Adrenal gland (tissue), 19 donors: ENCODE measurements at regions of chr21 and their contacts with region 1.

Region 1: GRCh38 chr21:31580866-31581276 is 78.6 kb upstream of the SOD1 start:
- DNase-seq: peak; percentile 53 to 89 (median 72)
- H3K4me3 ChIP-seq: no peak overlapping the region
- H3K27ac ChIP-seq: no peak overlapping the region
- H3K4me1 ChIP-seq: no peaks in the 10 kb centered on the region
- H3K27me3 ChIP-seq: no peaks in the 10 kb centered on the region
- CTCF ChIP-seq: peak; percentile 49 to 84 (median 80)
- POLR2A ChIP-seq: no peak

Region 2: DNA sequence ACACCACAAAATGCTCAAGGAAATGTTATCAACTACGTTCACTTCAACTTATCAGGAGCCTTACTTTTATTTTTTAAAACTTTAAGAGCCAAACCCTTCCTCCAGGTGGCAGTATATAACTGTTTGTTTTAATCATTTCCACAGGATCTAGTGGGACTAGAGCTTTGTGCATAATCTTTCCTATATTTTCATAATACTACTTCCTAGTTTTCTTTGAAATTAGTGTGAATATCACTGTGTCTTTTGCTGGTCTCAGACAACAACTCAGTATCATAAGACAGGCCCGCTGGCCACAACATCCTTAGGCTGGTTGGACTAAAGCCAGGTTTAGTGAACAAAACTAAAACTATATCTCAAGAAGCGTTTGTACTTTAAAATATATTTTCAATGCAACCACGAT is 382.3 kb before region 1 on chr21:
- intact Hi-C with region 1: loop called in 1 of 2 experiments (anchors 2 kb)
- DNase-seq: no peak
- H3K4me3 ChIP-seq: no peak overlapping the region
- H3K27ac ChIP-seq: no peak overlapping the region
- H3K4me1 ChIP-seq: peaks cover 0 to 10% of the 10 kb centered on the region in 2 donors
- H3K27me3 ChIP-seq: no peaks in the 10 kb centered on the region
- CTCF ChIP-seq: peak; percentile 53 to 83 (median 66)
- POLR2A ChIP-seq: no peak

Region 3: GRCh38 chr21:31781737-31782136 is 200.9 kb after region 1 on chr21:
- intact Hi-C with region 1: no loop called
- DNase-seq: peak; percentile 33 to 65 (median 57)
- H3K4me3 ChIP-seq: no peak overlapping the region
- H3K27ac ChIP-seq: no peak overlapping the region
- H3K4me1 ChIP-seq: no peaks in the 10 kb centered on the region
- H3K27me3 ChIP-seq: no peaks in the 10 kb centered on the region
- CTCF ChIP-seq: no peak
- POLR2A ChIP-seq: no peak